Dendritic cell treated with granulocyte-macrophage colony-stimulating factor and Interleukin-4, amounts not matched to agents 40 ng/mL and 50 ng/mL, for 4 days (primary cell): ENCODE measurements at regions of chr3 and their contacts with region 1.

Region 1: DNA sequence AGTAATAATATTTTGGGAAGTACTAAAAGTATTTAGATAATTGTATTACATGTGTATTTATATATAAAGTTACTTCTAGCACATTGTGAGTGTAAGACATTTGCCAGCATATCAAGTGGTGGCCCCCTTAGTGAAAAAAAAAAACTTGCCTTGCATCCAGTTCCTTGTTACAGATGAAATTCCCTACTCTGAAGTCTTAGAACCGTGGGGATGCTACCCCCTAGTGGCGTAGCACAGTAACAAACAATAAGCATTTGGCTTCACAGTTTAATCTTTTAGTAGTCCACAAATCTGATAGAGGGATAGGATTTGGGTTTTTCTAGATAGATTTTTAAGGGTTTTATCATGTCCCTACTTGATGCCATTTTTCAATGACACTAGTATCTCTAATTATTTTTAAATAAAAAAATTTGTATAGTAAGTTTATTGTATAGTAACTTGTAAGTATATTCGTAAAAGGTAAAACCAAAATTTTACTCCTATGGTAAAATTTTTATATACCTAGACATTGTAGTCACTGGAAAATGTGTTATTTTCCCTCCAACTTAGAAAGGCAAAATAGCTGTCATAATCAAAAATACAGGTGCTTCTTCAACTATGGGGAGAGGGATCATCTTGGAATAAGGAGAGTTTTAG is 14.3 kb downstream of the SMC4 start:
- H3K4me3 Mint-ChIP-seq: no peak overlapping the region
- H3K27ac Mint-ChIP-seq: no peak overlapping the region
- H3K4me1 Mint-ChIP-seq: peaks cover 7% of the 10 kb centered on the region
- H3K27me3 Mint-ChIP-seq: no peaks in the 10 kb centered on the region

Region 2: DNA sequence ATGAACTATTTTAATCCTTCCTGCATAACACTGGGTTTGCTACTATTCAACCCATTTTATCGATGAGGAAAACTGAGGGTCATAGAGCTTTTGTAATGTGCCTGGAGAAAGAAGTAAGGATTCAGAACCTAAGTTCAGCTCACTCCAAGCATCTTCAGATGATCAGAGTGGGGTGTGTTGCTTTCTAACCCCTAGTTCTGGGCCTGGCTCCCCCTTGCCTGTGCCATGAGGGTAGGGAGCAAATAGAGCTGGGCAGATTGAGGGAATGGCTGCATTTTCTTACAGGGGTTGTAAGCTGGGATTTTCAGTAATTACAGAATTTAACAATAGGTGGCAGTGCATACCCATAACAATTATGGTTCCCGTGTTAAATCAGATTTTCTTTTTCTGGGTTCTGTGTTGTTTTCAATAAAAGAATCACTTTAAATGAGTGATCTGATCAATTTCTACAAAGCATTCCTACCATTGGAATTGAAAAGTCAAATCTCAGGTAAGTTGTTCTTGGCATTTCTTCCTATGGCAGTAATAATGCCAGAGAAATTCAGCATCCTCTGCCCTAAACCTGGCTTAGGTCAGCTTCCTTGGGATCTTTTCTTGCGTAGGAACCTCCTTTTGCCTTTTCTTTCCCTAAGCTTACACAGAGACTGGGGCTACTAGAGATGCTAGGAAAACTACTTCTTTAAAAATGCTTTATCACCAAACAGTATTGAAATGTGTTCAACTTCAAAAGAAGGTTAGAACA is 528.9 kb before region 1 on chr3:
- intact Hi-C with region 1: loop called (anchors 10 kb)
- H3K4me3 Mint-ChIP-seq: no peak overlapping the region
- H3K27ac Mint-ChIP-seq: no peak overlapping the region
- H3K4me1 Mint-ChIP-seq: peaks cover 10% of the 10 kb centered on the region
- H3K27me3 Mint-ChIP-seq: no peaks in the 10 kb centered on the region

Region 3: GRCh38 chr3:160027541-160028195 is 386.1 kb before region 1 on chr3:
- intact Hi-C with region 1: loop called (anchors 2 kb)
- H3K4me3 Mint-ChIP-seq: no peak overlapping the region
- H3K27ac Mint-ChIP-seq: peak overlapping the region; percentile 16
- H3K4me1 Mint-ChIP-seq: peaks cover 16% of the 10 kb centered on the region
- H3K27me3 Mint-ChIP-seq: no peaks in the 10 kb centered on the region

Region 4: DNA sequence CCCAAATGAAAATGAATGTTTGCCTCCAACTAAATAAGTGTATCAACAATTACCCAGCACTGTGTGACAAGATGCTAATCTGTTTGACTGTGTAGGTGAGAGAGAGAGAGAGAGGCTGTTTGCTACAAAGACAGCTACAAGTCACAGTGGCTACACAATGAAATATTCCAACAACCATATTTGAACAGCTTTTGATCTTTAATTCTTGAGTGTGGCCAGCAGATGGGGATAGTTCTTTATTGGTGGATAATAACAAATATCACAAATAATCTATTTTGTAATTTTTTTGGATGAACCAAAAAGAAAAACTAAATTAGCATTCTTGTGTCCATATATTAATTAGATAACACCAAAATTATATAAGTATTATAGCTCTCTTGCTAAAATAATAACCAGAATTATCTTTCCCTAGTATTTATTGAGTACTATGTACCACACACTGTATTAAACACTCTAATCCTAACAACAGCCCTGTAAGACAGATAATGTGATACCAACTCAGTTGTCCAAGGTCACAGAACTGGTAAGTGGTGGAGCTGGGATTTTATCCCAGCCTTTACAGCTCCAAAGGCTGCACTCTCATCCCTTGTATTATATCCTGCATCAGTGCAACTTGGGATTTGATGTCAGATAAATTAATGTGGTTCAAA is 250.4 kb before region 1 on chr3:
- intact Hi-C with region 1: loop called (anchors 2 kb)
- H3K4me3 Mint-ChIP-seq: no peak overlapping the region
- H3K27ac Mint-ChIP-seq: no peak overlapping the region
- H3K4me1 Mint-ChIP-seq: no peaks in the 10 kb centered on the region
- H3K27me3 Mint-ChIP-seq: no peaks in the 10 kb centered on the region

Region 5: DNA sequence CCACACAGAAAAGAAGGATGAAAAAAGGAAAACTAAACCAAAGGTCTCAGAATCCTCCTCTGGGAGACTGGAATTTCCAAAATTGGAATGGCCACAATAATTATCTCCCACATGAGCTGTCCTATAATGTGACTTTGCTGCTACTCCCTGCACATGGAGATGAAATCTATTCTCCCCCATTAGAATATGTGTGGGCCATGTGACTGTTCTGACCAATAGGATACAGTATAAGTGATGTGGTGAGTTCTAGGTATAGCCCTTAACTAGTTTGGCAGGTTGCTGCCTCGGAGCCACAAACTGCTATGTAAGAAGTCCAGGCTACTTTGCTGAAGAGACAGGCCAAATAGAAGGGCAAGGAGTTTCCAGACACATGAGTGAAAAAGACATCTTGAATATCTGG is 30.7 kb after region 1 on chr3:
- intact Hi-C with region 1: no loop called
- H3K4me3 Mint-ChIP-seq: no peak overlapping the region
- H3K27ac Mint-ChIP-seq: no peak overlapping the region
- H3K4me1 Mint-ChIP-seq: peaks cover 8% of the 10 kb centered on the region
- H3K27me3 Mint-ChIP-seq: no peaks in the 10 kb centered on the region